PC-9 (cell line): ENCODE measurements at regions of chr19 and their contacts with region 1.

Region 1: DNA sequence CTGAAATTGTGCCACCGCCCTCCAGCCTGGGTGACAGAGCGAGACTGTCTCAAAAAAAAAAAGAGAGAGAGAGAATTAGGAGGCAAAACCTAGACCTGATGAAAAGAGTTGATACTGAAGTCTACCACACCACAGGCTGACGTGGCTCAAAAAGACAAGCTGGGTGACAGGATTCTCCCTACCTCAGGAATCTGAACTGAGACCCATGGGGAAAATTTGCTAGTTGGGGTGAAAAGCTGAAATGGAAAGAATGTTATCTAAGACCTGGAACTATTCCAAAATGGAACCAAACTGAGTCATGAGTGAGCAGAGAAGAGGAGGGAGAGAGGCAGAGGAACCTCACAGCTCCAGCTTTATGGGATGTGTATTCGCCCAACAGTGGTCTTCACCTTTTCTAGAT is 11.7 kb downstream of the SMG9 start:
- DNase-seq: no peak
- H3K4me3 ChIP-seq: no peak overlapping the region
- H3K27ac ChIP-seq: no peak overlapping the region
- H3K4me1 ChIP-seq: peaks cover 22% of the 10 kb centered on the region
- H3K27me3 ChIP-seq: no peaks in the 10 kb centered on the region
- CTCF ChIP-seq: no peak

Region 2: GRCh38 chr19:43619262-43620060 is 123.6 kb before region 1 on chr19 and contains the start of gene ZNF428:
- CTCF ChIA-PET with region 1: no interaction called
- POLR2A ChIA-PET with region 1: no interaction called
- intact Hi-C with region 1: no loop called
- DNase-seq: peak; percentile 64 to 84
- H3K4me3 ChIP-seq: peak within 1 kb of the TSS; percentile 65
- H3K27ac ChIP-seq: peak within 1 kb of the TSS; percentile 54
- H3K4me1 ChIP-seq: peaks cover 9% of the 10 kb centered on the region
- H3K27me3 ChIP-seq: no peaks in the 10 kb centered on the region
- CTCF ChIP-seq: no peak
- total RNA-seq, gene ZNF428: 46.6 and 61.1 TPM in 2 replicates

Region 3: GRCh38 chr19:43784981-43785808 is 42.2 kb after region 1 on chr19:
- CTCF ChIA-PET with region 1: interaction called, 9 read pairs
- POLR2A ChIA-PET with region 1: no interaction called
- intact Hi-C with region 1: loop called (anchors 1 kb)
- DNase-seq: peak; percentile 86 to 91
- H3K4me3 ChIP-seq: peak overlapping the region; percentile 16; the same call in 1 of the 2 replicates
- H3K27ac ChIP-seq: peak overlapping the region; percentile 70
- H3K4me1 ChIP-seq: peaks cover 43% of the 10 kb centered on the region
- H3K27me3 ChIP-seq: no peaks in the 10 kb centered on the region
- CTCF ChIP-seq: peak; percentile 97

Region 4: DNA sequence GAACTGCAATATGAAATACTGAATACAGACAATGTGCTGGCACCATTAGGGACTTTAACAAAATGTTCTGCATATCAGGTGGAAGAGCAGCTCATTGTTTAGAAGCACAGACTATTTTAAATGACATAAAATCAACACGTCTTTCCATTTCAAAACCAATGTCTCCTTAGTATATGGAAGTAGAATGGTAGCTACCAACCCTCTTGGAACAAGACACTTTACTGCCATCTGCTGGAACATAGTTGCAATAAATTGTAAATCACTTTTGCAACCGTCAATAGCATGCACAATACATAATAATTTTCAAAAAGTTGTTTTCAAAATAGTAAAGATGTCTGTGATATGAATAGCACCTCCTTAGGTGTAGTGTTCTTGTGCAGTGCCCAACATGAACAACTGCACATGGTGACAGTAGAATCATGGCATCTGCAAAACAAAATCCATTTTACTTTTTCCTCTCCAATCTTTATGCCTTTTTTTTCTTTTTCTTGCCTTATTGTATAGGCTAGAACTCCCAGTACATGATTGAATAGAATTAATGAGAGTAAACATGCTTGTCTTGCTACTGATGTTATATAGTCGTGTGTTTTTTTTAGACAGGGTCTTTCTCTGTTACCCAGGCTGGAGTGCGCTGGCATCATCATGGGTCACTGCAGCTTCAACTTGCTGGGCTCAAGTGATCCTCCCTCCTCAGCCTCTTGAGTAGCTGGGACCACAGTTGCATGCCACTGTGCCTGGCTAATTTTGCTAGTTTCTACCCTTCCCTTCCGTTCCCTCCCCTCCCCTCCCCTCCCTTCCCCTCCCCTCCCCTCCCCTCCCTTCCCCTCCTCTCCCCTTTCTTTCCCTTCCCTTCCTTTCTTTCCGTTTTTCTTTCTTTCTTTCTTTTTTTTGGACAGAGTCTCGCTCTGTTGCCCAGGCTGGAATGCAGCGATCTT is 67.0 kb after region 1 on chr19:
- CTCF ChIA-PET with region 1: interaction called, 4 read pairs
- POLR2A ChIA-PET with region 1: no interaction called
- intact Hi-C with region 1: loop called (anchors 1 kb)
- DNase-seq: peak in 1 of 2 experiments; percentile 66
- H3K4me3 ChIP-seq: no peak overlapping the region
- H3K27ac ChIP-seq: no peak overlapping the region
- H3K4me1 ChIP-seq: peaks cover 7% of the 10 kb centered on the region
- H3K27me3 ChIP-seq: no peaks in the 10 kb centered on the region
- CTCF ChIP-seq: peak; percentile 77

Region 5: DNA sequence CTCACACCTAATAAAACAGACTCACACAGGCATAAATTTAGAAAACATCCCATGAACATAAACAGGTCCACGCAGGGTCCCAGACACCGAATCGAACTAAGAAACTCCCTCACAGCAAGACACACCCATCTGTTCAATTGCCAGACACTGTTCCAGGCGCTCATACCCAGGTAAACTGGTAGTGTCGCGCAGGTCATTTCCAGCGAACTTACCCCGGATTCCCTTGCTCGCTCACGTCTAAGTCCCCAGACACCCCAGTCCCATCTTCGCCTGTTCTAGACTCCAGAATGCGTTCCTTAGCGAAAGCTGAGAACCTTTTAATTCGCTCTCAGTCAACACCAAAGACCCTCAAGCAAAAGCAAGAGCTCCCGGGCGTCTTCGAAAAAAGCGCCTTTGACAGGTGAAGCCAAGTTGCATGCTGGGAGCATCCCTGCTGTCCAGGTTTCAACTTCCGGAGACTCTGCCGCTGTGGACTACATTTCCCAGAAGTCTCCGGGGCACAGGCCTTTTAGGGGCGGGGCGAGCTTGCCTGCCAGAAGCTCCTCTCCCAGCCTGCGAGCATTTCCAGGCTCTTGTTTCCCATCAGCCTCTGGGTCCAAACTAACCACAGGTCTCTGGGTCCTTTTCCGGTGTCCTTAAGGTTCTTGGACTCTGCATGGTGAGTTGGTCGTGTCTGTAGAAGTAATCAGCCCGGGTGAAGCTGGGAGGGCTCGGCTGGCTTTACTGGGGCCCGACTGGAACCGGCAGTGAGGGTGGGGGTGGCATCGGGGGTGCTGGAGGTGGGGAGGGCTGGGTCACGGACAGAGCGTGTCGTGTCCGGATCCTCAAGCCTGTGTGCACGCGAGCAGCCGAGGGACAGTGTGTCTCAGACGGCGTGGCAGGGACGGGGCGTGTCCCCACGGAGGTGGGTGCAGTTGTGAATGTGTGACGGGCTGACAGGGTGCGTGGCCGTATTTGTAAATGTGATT is 84.0 kb after region 1 on chr19 and contains the start of gene ZNF283:
- CTCF ChIA-PET with region 1: no interaction called
- POLR2A ChIA-PET with region 1: interaction called, 10 read pairs
- intact Hi-C with region 1: no loop called
- DNase-seq: peak; percentile 79 to 88
- H3K4me3 ChIP-seq: peak within 1 kb of the TSS; percentile 74
- H3K27ac ChIP-seq: no peak within 1 kb of the TSS
- H3K4me1 ChIP-seq: peaks cover 7% of the 10 kb centered on the region
- H3K27me3 ChIP-seq: no peaks in the 10 kb centered on the region
- CTCF ChIP-seq: no peak
- total RNA-seq, gene ZNF283: 14.8 and 15.2 TPM in 2 replicates